ENCODE measurements at regions of chr17 and their contacts with region 1.

Region 1: DNA sequence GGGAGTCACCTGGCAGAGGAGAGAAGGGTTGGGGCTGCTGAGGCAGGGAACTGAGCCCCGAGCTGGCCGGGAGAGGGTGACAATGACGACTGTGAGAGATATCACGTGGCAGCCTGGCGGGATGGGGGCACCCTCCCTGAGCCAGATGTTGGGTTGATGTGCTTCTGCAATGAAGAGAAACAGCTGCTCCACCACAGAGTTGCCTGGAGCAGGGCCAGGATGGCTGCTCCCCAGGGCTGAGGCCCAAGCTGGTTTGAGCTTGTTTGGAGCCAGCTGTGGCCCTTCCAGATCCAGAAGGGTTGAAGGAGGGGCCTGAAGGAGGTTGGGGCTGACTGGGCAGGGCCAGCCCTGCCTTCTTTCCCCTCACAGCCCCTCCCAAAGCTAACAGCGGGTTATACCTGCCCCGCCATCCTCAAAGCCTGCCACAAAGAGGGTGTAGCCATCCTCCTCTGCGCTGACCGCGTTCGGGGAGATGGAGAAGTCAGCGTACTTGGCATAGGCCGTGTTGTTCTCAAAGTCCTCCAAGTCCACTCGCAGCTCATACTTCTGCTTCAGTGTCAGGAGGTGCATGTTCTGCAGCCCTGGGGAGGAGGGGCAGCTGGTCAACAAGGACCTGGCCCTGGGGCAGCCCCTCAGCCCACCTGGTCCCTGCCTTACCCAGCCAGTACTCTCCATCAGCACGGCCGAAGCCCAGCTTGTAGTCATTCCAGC is 2.1 kb downstream of the MFAP4 start:
- DNase-seq: peak; percentile 96
- H3K4me3 ChIP-seq: peak overlapping the region; percentile 29 to 48 (median 43)
- H3K27ac ChIP-seq: peak overlapping the region; percentile 94 to 98 (median 96)
- H3K4me1 ChIP-seq: peaks cover 58 to 100% (median 99%) of the 10 kb centered on the region in 4 donors
- H3K27me3 ChIP-seq: no peaks in the 10 kb centered on the region
- CTCF ChIP-seq: no peak
- EP300 ChIP-seq: no peak
- POLR2A ChIP-seq: no peak

Region 2: GRCh38 chr17:19447085-19447583 is 62.3 kb after region 1 on chr17:
- intact Hi-C with region 1: loop called (anchors 5 kb)
- DNase-seq: peak; percentile 93
- H3K4me3 ChIP-seq: no peak overlapping the region
- H3K27ac ChIP-seq: peak overlapping the region; percentile 78 to 89 (median 86)
- H3K4me1 ChIP-seq: peaks cover 5 to 33% (median 32%) of the 10 kb centered on the region in 4 donors
- H3K27me3 ChIP-seq: no peaks in the 10 kb centered on the region
- CTCF ChIP-seq: peak in 2 of 3 experiments; percentile 99
- EP300 ChIP-seq: no peak
- POLR2A ChIP-seq: no peak

Measured in esophagus muscularis mucosa (tissue), 4 donors.